ENCODE measurements at regions of chr2 and their contacts with region 1.

Region 1: DNA sequence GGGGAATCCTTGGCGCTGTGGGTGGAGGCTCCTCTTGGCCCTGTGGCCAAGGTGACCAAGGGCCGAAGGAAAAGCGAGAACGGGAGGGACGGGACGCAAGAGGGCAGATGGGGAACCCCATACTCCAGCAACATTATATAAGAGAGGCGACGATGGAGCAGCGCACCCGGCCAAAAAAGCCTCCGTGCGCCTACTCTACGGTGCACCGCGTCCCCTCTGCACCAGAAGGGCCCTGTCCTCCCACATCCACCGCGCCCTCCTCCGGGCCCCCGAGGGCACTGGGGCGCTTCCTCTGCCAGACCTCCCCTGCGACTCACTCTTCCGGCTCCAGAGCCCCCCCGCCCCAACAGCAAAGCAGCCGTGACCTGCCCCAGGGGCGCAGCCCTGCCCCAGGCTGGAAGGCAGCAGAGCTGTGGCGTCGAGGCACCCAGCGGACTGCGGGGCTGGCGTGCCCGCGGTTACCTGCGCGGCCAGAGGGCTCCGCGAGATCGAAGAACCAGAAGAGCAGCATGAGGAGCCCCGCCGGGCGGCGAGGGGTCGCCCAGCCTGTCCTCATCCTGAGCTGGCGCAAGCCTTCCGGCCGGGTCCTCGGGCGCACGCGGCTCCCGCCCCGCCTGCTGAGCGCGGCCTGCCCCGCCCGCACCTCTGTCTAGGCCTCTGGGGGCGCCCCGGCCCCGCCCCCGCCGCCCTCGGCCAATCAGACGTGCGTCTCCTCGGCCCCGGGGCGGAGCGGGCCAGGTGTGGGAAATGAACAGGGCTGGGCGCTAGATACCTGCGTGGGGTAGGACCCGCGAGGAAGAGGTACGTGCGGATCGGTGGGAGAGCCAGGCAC is 106.3 kb upstream of the CD302 start:
- DNase-seq: peak; percentile 91
- ATAC-seq: peak; percentile 76
- H3K4me3 Mint-ChIP-seq: peak within 1 kb of the TSS; percentile 93
- H3K27ac Mint-ChIP-seq: peak within 1 kb of the TSS; percentile 97
- H3K4me1 Mint-ChIP-seq: peaks cover 73% of the 10 kb centered on the region
- H3K27me3 Mint-ChIP-seq: no peaks in the 10 kb centered on the region

Region 2: DNA sequence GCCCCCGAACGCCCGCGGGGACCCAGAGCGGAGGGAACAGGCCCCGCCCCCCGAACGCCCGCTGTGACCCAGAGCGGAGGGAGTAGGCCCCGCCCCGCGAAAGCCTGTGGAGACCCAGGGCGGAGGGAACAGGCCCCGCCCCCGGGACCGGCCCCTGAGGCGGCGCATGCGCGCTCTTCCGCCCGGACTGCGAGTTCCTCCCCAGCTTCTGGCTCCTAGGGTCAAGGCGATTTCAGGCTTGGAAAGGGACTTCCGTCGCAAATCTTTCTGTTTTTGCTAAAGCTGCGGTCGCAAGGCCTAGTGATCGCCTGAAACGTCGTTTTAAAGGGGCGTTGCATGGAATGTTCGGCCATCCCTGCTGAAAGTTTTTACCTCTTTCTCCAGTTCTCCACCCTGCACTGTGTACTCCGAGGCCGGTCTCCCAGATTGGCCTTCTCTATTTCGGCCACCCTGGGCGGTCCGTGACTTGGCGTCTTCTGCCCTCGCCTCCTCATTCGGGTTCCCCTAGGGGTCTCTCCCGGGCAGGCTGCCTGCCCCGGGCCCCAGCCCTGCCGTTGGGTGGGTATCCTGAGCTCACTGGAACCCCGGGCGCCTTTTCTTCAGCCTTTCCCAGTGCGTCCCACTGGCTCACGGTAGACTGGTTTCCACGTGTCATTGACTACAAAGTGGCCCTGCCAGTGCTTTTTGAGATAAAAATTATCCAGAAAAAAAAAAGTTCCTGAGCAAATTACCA is 617.5 kb before region 1 on chr2:
- CTCF ChIA-PET with region 1: no interaction called
- POLR2A ChIA-PET with region 1: no interaction called
- intact Hi-C with region 1: loop called in 1 of 2 experiments (anchors 2 kb)
- DNase-seq: peak; percentile 99
- ATAC-seq: peak; percentile 99
- H3K4me3 Mint-ChIP-seq: peak overlapping the region; percentile 84
- H3K27ac Mint-ChIP-seq: peak overlapping the region; percentile 83
- H3K4me1 Mint-ChIP-seq: peaks cover 29% of the 10 kb centered on the region
- H3K27me3 Mint-ChIP-seq: no peaks in the 10 kb centered on the region

Region 3: DNA sequence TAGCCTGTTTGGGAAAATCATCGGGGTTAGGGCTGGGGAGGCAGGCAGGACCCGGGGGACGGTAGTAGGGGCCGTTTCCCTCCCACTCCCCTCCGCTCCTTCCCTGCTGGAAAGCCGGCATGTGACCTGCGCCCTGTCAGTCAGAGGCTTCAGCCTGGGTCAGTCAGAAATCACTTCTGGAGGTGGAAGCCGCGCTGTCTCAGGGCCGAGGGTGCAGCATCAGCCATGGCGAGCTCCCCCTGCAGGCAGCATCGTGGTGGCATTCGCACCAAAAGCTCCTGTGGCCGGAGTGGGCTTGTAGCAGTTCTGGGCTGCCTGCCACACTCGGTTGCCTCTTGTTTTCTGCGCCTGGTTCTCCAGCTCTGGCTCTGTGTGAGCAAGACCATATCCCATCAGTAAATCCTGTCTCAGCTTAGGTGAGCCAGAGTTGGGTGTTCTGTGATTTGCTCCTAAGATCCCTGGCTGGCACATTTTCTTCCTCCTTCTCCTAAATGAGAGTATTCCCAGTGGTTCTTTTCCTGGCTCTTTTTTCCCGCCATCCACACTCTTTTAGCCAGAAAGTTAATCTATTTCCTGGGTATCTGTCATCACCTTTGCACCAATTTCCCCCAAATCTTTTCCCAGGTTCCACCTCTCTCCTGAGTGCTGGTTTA is 17.5 kb after region 1 on chr2:
- CTCF ChIA-PET with region 1: interaction called, 46 read pairs
- POLR2A ChIA-PET with region 1: interaction called, 4 read pairs
- intact Hi-C with region 1: loop called (anchors 1 kb)
- DNase-seq: peak; percentile 91
- ATAC-seq: peak; percentile 67
- H3K4me3 Mint-ChIP-seq: peak overlapping the region; percentile 1
- H3K27ac Mint-ChIP-seq: peak overlapping the region; percentile 58
- H3K4me1 Mint-ChIP-seq: peaks cover 41% of the 10 kb centered on the region
- H3K27me3 Mint-ChIP-seq: peaks cover 20% of the 10 kb centered on the region

Region 4: DNA sequence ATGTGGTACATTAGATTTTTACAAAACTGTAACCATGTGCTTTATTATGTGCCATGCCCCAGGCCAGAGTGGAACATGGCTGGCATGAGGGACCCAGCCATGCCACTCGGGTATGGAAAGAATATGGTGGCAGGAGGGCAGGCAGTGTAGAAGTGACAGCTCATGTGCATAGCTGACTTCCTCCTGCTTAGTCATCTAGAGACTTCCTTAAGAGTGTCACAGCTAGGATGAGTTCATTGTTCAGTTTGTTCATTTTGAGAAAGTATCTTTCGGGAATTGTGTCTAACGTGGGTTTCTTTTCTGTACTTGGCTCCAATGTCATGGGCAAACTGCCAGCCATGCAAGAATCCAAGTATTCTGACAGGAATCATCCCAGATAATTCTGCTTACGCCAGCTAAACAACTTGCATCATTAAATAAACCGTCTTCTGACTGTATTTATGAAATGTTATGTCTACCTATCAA is 390.0 kb after region 1 on chr2:
- CTCF ChIA-PET with region 1: no interaction called
- POLR2A ChIA-PET with region 1: no interaction called
- intact Hi-C with region 1: loop called in 1 of 2 experiments (anchors 10 kb)
- DNase-seq: peak; percentile 69
- ATAC-seq: peak; percentile 93
- H3K4me3 Mint-ChIP-seq: no peak overlapping the region
- H3K27ac Mint-ChIP-seq: peak overlapping the region; percentile 88
- H3K4me1 Mint-ChIP-seq: peaks cover 86% of the 10 kb centered on the region
- H3K27me3 Mint-ChIP-seq: no peaks in the 10 kb centered on the region

Region 5: GRCh38 chr2:161308178-161308955 is 1404.0 kb after region 1 on chr2 and contains the start of gene PSMD14:
- CTCF ChIA-PET with region 1: no interaction called
- POLR2A ChIA-PET with region 1: no interaction called
- intact Hi-C with region 1: loop called in 1 of 2 experiments (anchors 10 kb)
- DNase-seq: peak; percentile 96
- ATAC-seq: peak; percentile 91
- H3K4me3 Mint-ChIP-seq: peak within 1 kb of the TSS; percentile 87
- H3K27ac Mint-ChIP-seq: peak within 1 kb of the TSS; percentile 93
- H3K4me1 Mint-ChIP-seq: peaks cover 28% of the 10 kb centered on the region
- H3K27me3 Mint-ChIP-seq: no peaks in the 10 kb centered on the region
- total RNA-seq, gene PSMD14: 69.5 to 85.7 TPM

Measured in activated CD4-positive, alpha-beta T cell treated with anti-CD3 and anti-CD28 coated beads for 36 hours (primary cell).